ENCODE measurements at regions of chr13 and their contacts with region 1.

Region 1: DNA sequence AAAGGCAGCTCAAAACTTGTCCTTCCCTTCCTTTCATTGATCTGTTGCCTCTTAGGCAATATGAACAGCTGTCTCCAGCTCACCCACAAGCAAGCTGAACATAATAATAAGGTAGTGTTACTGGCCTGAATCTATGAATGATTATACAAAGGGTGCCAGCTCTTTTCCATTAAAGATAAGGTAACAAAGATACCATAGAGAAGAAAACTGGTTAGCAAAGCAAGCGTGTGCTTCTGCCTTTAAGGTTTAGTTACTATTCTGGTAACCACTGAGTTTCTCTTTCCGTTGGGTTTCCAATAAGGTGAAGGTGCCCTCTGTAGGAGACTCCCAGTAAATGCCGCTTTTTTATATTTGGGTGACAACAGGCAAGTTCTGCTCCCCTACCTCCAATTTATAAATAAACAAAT is 12.1 kb upstream of the DACH1 start:
- DNase-seq: peak; percentile 27
- ATAC-seq: peak; percentile 84
- H3K4me3 ChIP-seq: no peak overlapping the region
- H3K27ac ChIP-seq: no peak overlapping the region
- H3K4me1 ChIP-seq: no peaks in the 10 kb centered on the region
- H3K27me3 ChIP-seq: no peaks in the 10 kb centered on the region
- CTCF ChIP-seq: peak; percentile 49
- EP300 ChIP-seq: no peak
- POLR2A ChIP-seq: no peak
- RAD21 ChIP-seq: no peak

Region 2: GRCh38 chr13:71320452-71320851 is 558.7 kb before region 1 on chr13:
- CTCF ChIA-PET with region 1: interaction called, 6 read pairs
- POLR2A ChIA-PET with region 1: no interaction called
- in situ Hi-C with region 1: loop called (anchors 25 kb)
- intact Hi-C with region 1: loop called (anchors 1 kb)
- DNase-seq: peak; percentile 24
- ATAC-seq: peak; percentile 64
- H3K4me3 ChIP-seq: no peak overlapping the region
- H3K27ac ChIP-seq: no peak overlapping the region
- H3K4me1 ChIP-seq: no peaks in the 10 kb centered on the region
- H3K27me3 ChIP-seq: no peaks in the 10 kb centered on the region
- CTCF ChIP-seq: peak; percentile 66
- EP300 ChIP-seq: no peak
- POLR2A ChIP-seq: no peak
- RAD21 ChIP-seq: no peak

Region 3: DNA sequence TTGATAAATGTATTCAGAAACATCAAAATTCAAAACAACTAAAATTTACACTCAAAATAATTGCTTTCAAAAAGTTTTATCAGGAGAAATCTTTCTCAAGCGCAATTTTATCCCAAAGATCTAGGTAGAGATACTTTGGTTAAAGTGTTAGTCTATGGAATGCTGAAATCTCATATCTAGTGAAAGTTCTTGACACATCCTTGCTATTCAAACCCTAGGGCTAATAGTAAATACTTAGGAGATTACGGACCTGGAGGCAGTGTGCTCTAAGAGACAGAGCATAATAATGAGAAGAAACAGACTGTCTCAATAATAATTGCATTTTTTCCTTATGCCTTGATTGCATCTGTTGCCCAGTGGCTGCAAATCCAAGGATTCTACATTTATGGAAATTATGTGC is 342.9 kb before region 1 on chr13:
- CTCF ChIA-PET with region 1: no interaction called
- POLR2A ChIA-PET with region 1: no interaction called
- in situ Hi-C with region 1: no loop called
- intact Hi-C with region 1: no loop called
- DNase-seq: no peak
- ATAC-seq: no peak
- H3K4me3 ChIP-seq: no peak overlapping the region
- H3K27ac ChIP-seq: no peak overlapping the region
- H3K4me1 ChIP-seq: no peaks in the 10 kb centered on the region
- H3K27me3 ChIP-seq: no peaks in the 10 kb centered on the region
- CTCF ChIP-seq: no peak
- EP300 ChIP-seq: no peak
- POLR2A ChIP-seq: no peak
- RAD21 ChIP-seq: no peak

Region 4: DNA sequence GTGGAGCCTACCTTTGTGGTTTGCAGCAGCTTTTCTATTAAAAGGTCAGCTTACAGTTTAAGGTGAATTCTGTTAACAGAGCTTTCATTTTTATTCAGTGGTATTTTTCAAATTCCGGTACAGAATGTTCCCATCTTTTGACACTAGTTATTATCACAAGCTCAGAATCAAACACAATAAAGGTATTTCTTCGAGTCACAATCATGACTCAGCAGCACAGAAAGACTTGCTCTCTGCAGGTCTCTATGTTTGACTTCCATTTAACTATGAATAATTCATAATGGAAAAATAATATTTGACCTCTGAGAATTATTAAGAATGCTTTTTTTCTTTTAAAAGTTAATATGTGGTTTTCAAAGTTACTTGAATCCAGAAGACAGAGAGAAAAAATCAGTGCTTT is 40.3 kb before region 1 on chr13:
- CTCF ChIA-PET with region 1: no interaction called
- POLR2A ChIA-PET with region 1: no interaction called
- in situ Hi-C with region 1: no loop called
- intact Hi-C with region 1: no loop called
- DNase-seq: no peak
- ATAC-seq: no peak
- H3K4me3 ChIP-seq: no peak overlapping the region
- H3K27ac ChIP-seq: no peak overlapping the region
- H3K4me1 ChIP-seq: no peaks in the 10 kb centered on the region
- H3K27me3 ChIP-seq: no peaks in the 10 kb centered on the region
- CTCF ChIP-seq: no peak
- EP300 ChIP-seq: no peak
- POLR2A ChIP-seq: no peak
- RAD21 ChIP-seq: no peak